MCF 10A (cell line): ENCODE measurements at regions of chrX and their contacts with region 1.

Region 1: GRCh38 chrX:153763989-153764755 is at the start of gene PLXNB3:
- DNase-seq: peak; percentile 79
- H3K4me3 Mint-ChIP-seq: peak within 1 kb of the TSS; percentile 81
- H3K27ac Mint-ChIP-seq: peak within 1 kb of the TSS; percentile 75
- H3K4me1 Mint-ChIP-seq: peaks cover 6% of the 10 kb centered on the region
- H3K27me3 Mint-ChIP-seq: no peaks in the 10 kb centered on the region
- CTCF ChIP-seq: peak; percentile 60
- total RNA-seq, gene PLXNB3: 7.2 and 13.5 TPM in 2 replicates

Region 2: DNA sequence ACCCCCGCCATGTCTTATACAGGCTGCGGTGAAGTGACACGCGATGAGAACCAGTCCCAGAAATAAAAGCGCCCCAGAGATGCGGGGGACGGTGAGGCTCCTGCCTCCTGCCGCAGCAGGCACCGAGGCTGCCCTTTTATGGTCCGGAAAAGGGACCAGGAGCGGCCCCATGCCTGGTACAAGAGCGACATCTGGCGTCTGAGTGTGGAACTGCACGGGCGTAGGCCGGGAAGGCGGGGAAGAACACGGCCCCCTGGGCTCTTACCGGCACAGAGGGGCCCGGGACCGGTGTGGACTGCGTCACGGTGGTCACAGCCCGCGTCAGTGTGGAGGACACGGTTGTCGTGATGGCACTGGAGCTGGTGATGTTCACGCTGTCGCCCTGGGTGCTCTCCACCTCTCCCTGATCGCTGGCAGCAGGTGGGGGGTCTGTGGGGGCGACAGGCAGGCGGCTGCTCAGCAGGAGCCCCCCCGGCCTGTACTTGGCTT is 189.2 kb after region 1 on chrX:
- CTCF ChIA-PET with region 1: interaction called, 51 read pairs
- POLR2A ChIA-PET with region 1: no interaction called
- intact Hi-C with region 1: loop called (anchors 1 kb)
- DNase-seq: peak; percentile 61
- H3K4me3 Mint-ChIP-seq: no peak overlapping the region
- H3K27ac Mint-ChIP-seq: no peak overlapping the region
- H3K4me1 Mint-ChIP-seq: no peaks in the 10 kb centered on the region
- H3K27me3 Mint-ChIP-seq: no peaks in the 10 kb centered on the region
- CTCF ChIP-seq: peak; percentile 96

Region 3: DNA sequence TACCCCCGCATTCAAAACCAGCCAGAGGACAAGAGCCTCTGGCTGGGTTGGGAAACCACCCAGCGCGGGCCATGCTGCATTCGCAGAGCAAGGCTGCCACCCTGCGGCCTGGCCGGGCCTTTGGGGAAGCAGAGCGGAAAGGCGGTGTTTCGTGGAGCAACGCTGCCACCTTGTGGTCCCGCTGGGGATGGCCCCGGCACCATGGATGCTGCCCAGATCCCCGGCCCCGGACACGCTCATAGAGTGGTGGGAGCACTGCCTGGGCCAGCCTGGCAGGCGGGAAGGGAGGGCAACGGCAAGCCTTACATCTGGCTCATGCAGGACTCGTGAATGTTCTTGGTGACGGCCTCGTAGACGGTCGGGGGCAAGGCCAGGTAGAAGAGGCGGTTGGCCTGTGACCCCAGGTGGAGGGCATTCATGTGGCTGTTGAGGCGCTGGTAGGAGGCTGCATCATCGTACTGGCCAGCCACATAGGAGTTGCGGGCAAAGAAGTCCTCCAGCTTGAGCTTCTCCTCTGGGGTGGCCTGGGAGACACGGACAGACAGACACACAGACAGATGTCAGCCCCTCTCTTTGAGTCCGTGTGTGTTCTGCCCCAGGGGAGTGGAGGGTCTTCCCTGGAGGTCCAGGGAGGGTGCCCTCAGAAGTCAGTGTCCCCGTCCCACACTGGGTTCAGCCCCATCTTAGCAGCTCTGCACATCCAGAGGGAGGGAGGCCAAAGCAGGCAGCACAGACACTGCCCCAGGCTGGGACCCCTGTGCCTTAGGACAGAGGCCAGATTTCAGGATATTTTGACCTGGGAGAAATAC is 770.9 kb after region 1 on chrX:
- CTCF ChIA-PET with region 1: no interaction called
- POLR2A ChIA-PET with region 1: no interaction called
- intact Hi-C with region 1: loop called (anchors 5 kb)
- DNase-seq: peak; percentile 86
- H3K4me3 Mint-ChIP-seq: no peak overlapping the region
- H3K27ac Mint-ChIP-seq: peak overlapping the region; percentile 35
- H3K4me1 Mint-ChIP-seq: no peaks in the 10 kb centered on the region
- H3K27me3 Mint-ChIP-seq: no peaks in the 10 kb centered on the region
- CTCF ChIP-seq: peak; percentile 100